Caco-2 (cell line): ENCODE measurements at regions of chr4 and their contacts with region 1.

Region 1: DNA sequence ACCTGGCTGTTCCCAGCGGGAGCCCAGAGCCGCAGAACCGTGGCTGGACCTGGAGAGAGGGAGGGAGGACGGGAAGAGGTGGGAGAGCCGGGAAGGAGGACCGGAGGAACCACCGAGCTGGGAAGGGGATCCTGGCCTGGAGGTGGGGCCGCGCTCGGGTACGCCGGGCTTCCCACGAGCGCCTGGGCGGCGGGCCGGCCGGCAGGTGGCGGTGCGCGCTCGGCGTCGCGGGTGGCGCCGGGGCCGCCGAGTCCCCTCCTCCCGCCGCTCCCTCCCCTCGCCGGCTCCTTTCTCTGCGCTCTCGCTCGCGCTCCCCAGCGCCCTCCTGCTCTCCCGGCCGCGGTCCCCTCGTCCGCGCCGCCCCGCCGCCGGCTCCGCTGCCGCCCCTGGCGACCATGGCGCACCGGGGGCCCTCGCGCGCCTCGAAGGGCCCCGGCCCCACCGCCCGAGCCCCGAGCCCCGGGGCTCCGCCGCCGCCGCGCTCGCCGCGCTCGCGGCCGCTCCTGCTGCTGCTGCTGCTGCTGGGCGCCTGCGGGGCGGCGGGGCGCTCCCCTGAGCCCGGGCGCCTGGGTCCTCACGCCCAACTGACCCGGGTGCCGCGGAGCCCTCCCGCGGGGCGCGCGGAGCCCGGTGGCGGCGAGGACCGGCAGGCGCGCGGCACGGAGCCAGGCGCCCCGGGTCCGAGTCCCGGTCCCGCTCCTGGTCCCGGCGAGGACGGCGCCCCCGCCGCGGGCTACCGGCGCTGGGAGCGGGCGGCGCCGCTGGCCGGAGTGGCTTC is at the start of gene SORCS2:
- DNase-seq: peak; percentile 62 to 89
- H3K4me3 ChIP-seq: peak within 1 kb of the TSS; percentile 44
- H3K4me3 Mint-ChIP-seq: peak within 1 kb of the TSS; percentile 53
- H3K27ac Mint-ChIP-seq: no peak within 1 kb of the TSS
- H3K4me1 ChIP-seq: peaks cover 3% of the 10 kb centered on the region; the same call in 1 of the 2 replicates
- H3K4me1 Mint-ChIP-seq: peaks cover 12% of the 10 kb centered on the region
- H3K27me3 ChIP-seq: no peaks in the 10 kb centered on the region
- H3K27me3 Mint-ChIP-seq: peaks cover 5% of the 10 kb centered on the region
- CTCF ChIP-seq: peak; percentile 29 to 77
- total RNA-seq, gene SORCS2: 1.6 and 2.1 TPM in 2 replicates

Region 2: GRCh38 chr4:7042697-7043464 is 149.6 kb before region 1 on chr4 and contains the start of gene TADA2B:
- CTCF ChIA-PET with region 1: interaction called, 14 read pairs
- POLR2A ChIA-PET with region 1: no interaction called
- intact Hi-C with region 1: no loop called
- DNase-seq: peak; percentile 96 to 98
- H3K4me3 ChIP-seq: peak within 1 kb of the TSS; percentile 98
- H3K4me3 Mint-ChIP-seq: peak within 1 kb of the TSS; percentile 82
- H3K27ac Mint-ChIP-seq: peak within 1 kb of the TSS; percentile 39
- H3K4me1 ChIP-seq: peaks cover 4% of the 10 kb centered on the region; the same call in 1 of the 2 replicates
- H3K4me1 Mint-ChIP-seq: peaks cover 26% of the 10 kb centered on the region
- H3K27me3 ChIP-seq: no peaks in the 10 kb centered on the region
- H3K27me3 Mint-ChIP-seq: no peaks in the 10 kb centered on the region
- CTCF ChIP-seq: no peak
- total RNA-seq, gene TADA2B: 17.2 and 21.8 TPM in 2 replicates

Region 3: GRCh38 chr4:7124689-7125442 is 67.6 kb before region 1 on chr4:
- CTCF ChIA-PET with region 1: no interaction called
- POLR2A ChIA-PET with region 1: no interaction called
- intact Hi-C with region 1: no loop called
- DNase-seq: no peak
- H3K4me3 ChIP-seq: no peak overlapping the region
- H3K4me3 Mint-ChIP-seq: no peak overlapping the region
- H3K27ac Mint-ChIP-seq: no peak overlapping the region
- H3K4me1 ChIP-seq: no peaks in the 10 kb centered on the region
- H3K4me1 Mint-ChIP-seq: no peaks in the 10 kb centered on the region
- H3K27me3 ChIP-seq: no peaks in the 10 kb centered on the region
- H3K27me3 Mint-ChIP-seq: no peaks in the 10 kb centered on the region
- CTCF ChIP-seq: no peak

Region 4: GRCh38 chr4:7295911-7296660 is 103.6 kb after region 1 on chr4:
- CTCF ChIA-PET with region 1: interaction called, 9 read pairs
- POLR2A ChIA-PET with region 1: no interaction called
- intact Hi-C with region 1: loop called (anchors 1 kb)
- DNase-seq: peak in 1 of 2 experiments; percentile 50
- H3K4me3 ChIP-seq: no peak overlapping the region
- H3K4me3 Mint-ChIP-seq: no peak overlapping the region
- H3K27ac Mint-ChIP-seq: no peak overlapping the region
- H3K4me1 ChIP-seq: no peaks in the 10 kb centered on the region
- H3K4me1 Mint-ChIP-seq: no peaks in the 10 kb centered on the region
- H3K27me3 ChIP-seq: no peaks in the 10 kb centered on the region
- H3K27me3 Mint-ChIP-seq: no peaks in the 10 kb centered on the region
- CTCF ChIP-seq: peak; percentile 56 to 68

Region 5: GRCh38 chr4:7335344-7336069 is 143.1 kb after region 1 on chr4:
- CTCF ChIA-PET with region 1: interaction called, 11 read pairs
- POLR2A ChIA-PET with region 1: no interaction called
- intact Hi-C with region 1: loop called (anchors 1 kb)
- DNase-seq: peak; percentile 63 to 76
- H3K4me3 ChIP-seq: no peak overlapping the region
- H3K4me3 Mint-ChIP-seq: no peak overlapping the region
- H3K27ac Mint-ChIP-seq: no peak overlapping the region
- H3K4me1 ChIP-seq: no peaks in the 10 kb centered on the region
- H3K4me1 Mint-ChIP-seq: no peaks in the 10 kb centered on the region
- H3K27me3 ChIP-seq: no peaks in the 10 kb centered on the region
- H3K27me3 Mint-ChIP-seq: no peaks in the 10 kb centered on the region
- CTCF ChIP-seq: peak; percentile 70 to 74

Region 6: GRCh38 chr4:7719354-7720174 is 527.1 kb after region 1 on chr4:
- CTCF ChIA-PET with region 1: no interaction called
- POLR2A ChIA-PET with region 1: no interaction called
- intact Hi-C with region 1: loop called (anchors 5 kb)
- DNase-seq: peak; percentile 60 to 79
- H3K4me3 ChIP-seq: no peak overlapping the region; the same call in 1 of the 2 replicates
- H3K4me3 Mint-ChIP-seq: no peak overlapping the region
- H3K27ac Mint-ChIP-seq: no peak overlapping the region
- H3K4me1 ChIP-seq: peaks cover 7% of the 10 kb centered on the region; the same call in 1 of the 2 replicates
- H3K4me1 Mint-ChIP-seq: no peaks in the 10 kb centered on the region
- H3K27me3 ChIP-seq: no peaks in the 10 kb centered on the region
- H3K27me3 Mint-ChIP-seq: no peaks in the 10 kb centered on the region
- CTCF ChIP-seq: peak; percentile 69 to 83